SK-N-SH (cell line): ENCODE measurements at regions of chr15 and their contacts with region 1.

Region 1: GRCh38 chr15:34358367-34358766 is 8.6 kb downstream of the LPCAT4 start:
- DNase-seq: peak; percentile 41
- H3K4me3 ChIP-seq: no peak overlapping the region
- H3K27ac ChIP-seq: no peak overlapping the region
- H3K4me1 ChIP-seq: no peaks in the 10 kb centered on the region
- H3K27me3 ChIP-seq: no peaks in the 10 kb centered on the region
- CTCF ChIP-seq: peak; percentile 45; the same call in 1 of the 2 replicates
- EP300 ChIP-seq: no peak
- RAD21 ChIP-seq: no peak

Region 2: GRCh38 chr15:34101366-34102175 is 256.8 kb before region 1 on chr15 and contains the starts of genes EMC7 and PGBD4:
- CTCF ChIA-PET with region 1: no interaction called
- POLR2A ChIA-PET with region 1: no interaction called
- DNase-seq: peak; percentile 89
- H3K4me3 ChIP-seq: peak within 1 kb of the TSS; percentile 69 to 86
- H3K27ac ChIP-seq: peak within 1 kb of the TSS; percentile 81 to 85
- H3K4me1 ChIP-seq: peaks cover 8 to 9% of the 10 kb centered on the region in 2 experiments
- H3K27me3 ChIP-seq: no peaks in the 10 kb centered on the region
- CTCF ChIP-seq: no peak
- EP300 ChIP-seq: no peak
- RAD21 ChIP-seq: no peak
- polyA plus RNA-seq, gene EMC7: 92.3 and 105 TPM in 2 replicates
- polyA plus RNA-seq, gene PGBD4: 0.77 and 1.3 TPM in 2 replicates

Region 3: DNA sequence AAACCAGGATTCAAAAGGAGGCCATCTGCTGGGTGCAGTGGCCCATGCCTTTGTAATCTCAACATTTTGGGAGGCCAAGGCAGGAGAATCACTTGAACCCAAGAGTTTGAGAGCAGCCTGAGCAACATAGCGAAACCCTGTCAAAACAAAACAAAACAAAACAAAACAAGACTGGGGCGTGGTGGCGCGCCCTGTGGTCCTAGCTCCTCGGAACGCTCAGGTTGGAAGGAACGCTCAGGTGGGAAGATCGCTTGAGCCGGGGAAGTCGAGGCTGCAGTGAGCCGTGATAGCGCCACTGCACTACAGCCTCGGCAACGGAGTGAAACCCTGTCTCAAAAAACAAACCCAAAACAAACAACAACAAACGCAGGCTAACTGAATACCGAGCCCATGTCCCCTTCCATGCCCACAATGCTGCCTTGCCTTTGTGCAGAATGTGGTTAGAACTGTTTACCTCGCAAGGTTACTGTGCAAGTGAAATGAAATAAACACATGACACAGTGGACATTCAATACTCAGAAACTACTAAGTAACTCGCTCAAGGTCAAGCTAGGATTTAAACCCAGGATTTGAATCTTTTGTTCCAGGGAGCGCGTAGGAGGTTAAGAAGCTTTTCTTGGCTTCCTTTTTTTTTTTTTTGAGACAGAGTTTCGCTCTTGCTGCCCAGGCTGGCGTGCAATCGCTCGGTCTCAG is 134.3 kb before region 1 on chr15:
- CTCF ChIA-PET with region 1: no interaction called
- POLR2A ChIA-PET with region 1: no interaction called
- DNase-seq: peak; percentile 31
- H3K4me3 ChIP-seq: peak overlapping the region; percentile 83 to 96
- H3K27ac ChIP-seq: peak overlapping the region; percentile 64 to 92
- H3K4me1 ChIP-seq: peaks cover 7 to 13% of the 10 kb centered on the region in 2 experiments; a peak in 3 of 4 replicates
- H3K27me3 ChIP-seq: no peaks in the 10 kb centered on the region
- CTCF ChIP-seq: no peak
- EP300 ChIP-seq: no peak
- RAD21 ChIP-seq: no peak

Region 4: GRCh38 chr15:34342737-34343575 is 15.4 kb before region 1 on chr15 and contains the starts of genes NOP10 and NUTM1:
- CTCF ChIA-PET with region 1: interaction called, 18 read pairs
- POLR2A ChIA-PET with region 1: interaction called, 3 read pairs
- DNase-seq: peak; percentile 79
- H3K4me3 ChIP-seq: peak within 1 kb of the TSS; percentile 59 to 99
- H3K27ac ChIP-seq: peak within 1 kb of the TSS; percentile 86 to 93
- H3K4me1 ChIP-seq: peaks cover 4 to 5% of the 10 kb centered on the region in 2 experiments; a peak in 3 of 4 replicates
- H3K27me3 ChIP-seq: no peaks in the 10 kb centered on the region
- CTCF ChIP-seq: peak; percentile 94
- EP300 ChIP-seq: peak; percentile 27 to 31; a peak in 2 of 4 replicates
- RAD21 ChIP-seq: peak; percentile 77
- polyA plus RNA-seq, gene NOP10: 440 and 583 TPM in 2 replicates
- polyA plus RNA-seq, gene NUTM1: not detected in 2 replicates

Region 5: DNA sequence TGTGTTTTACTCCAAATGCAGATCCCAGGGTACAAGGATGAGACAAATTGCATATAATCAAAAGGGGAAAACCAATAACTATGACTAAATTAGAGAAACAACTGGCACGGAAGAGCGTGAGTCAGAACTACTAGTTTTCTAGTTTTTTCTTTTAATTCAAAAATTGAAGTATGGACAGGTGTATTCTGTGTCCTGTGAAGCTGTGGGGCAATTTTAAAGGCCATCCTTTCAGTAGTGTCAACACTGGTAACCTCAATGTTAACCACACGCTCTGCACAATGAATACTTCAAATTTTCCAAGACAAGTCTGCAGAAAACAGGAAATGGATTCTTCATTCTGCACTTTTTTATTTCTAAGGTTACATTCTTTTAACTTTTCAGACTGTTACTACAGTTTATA is 111.7 kb after region 1 on chr15:
- CTCF ChIA-PET with region 1: no interaction called
- POLR2A ChIA-PET with region 1: no interaction called
- DNase-seq: no peak
- H3K4me3 ChIP-seq: no peak overlapping the region
- H3K27ac ChIP-seq: no peak overlapping the region
- H3K4me1 ChIP-seq: no peaks in the 10 kb centered on the region
- H3K27me3 ChIP-seq: no peaks in the 10 kb centered on the region
- CTCF ChIP-seq: no peak
- EP300 ChIP-seq: no peak
- RAD21 ChIP-seq: no peak

Region 6: GRCh38 chr15:35019386-35020083 is 661.2 kb after region 1 on chr15:
- CTCF ChIA-PET with region 1: no interaction called
- POLR2A ChIA-PET with region 1: no interaction called
- DNase-seq: no peak
- H3K4me3 ChIP-seq: no peak overlapping the region
- H3K27ac ChIP-seq: no peak overlapping the region
- H3K4me1 ChIP-seq: no peaks in the 10 kb centered on the region
- H3K27me3 ChIP-seq: no peaks in the 10 kb centered on the region
- CTCF ChIP-seq: no peak
- EP300 ChIP-seq: no peak
- RAD21 ChIP-seq: no peak